ENCODE measurements at regions of chr6 and their contacts with region 1.

Region 1: GRCh38 chr6:7401075-7401474 is 11.5 kb downstream of the RIOK1 start:
- DNase-seq: peak; percentile 86
- ATAC-seq: peak; percentile 100
- H3K4me3 ChIP-seq: no peak overlapping the region; the same call in 1 of the 2 replicates
- H3K27ac ChIP-seq: peak overlapping the region; percentile 43
- H3K4me1 ChIP-seq: peaks cover 16% of the 10 kb centered on the region
- H3K27me3 ChIP-seq: no peaks in the 10 kb centered on the region
- CTCF ChIP-seq: no peak

Region 2: DNA sequence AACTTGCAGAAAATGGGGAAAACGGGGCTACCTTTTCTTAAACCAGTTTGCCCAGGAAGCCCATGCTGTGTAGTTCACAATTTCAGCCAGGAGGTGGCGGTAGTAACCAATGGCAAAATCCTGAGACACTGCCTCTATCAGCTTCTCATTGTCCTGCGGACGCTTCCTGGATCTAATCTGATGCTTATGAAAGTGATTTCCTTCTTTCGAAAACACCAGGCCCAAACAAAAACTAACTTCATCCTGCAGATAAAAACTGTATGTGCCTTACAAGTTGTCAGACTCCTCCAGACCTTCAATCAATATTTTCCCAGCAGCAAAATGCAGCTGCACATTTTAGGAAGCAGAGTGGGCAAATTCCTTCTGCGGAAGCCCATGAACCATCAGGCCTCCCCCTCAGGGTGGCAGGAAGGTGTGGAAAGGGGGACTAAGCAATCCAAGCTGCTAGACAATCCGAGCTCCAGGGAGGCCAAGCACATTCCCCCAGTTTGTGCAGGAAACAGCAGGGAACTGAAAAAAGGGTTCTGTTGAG is 724.1 kb before region 1 on chr6:
- CTCF ChIA-PET with region 1: no interaction called
- POLR2A ChIA-PET with region 1: no interaction called
- intact Hi-C with region 1: loop called (anchors 10 kb)
- DNase-seq: peak; percentile 93
- ATAC-seq: peak; percentile 74
- H3K4me3 ChIP-seq: no peak overlapping the region
- H3K27ac ChIP-seq: peak overlapping the region; percentile 36
- H3K4me1 ChIP-seq: peaks cover 17% of the 10 kb centered on the region
- H3K27me3 ChIP-seq: peaks cover 4% of the 10 kb centered on the region; the same call in 1 of the 2 replicates
- CTCF ChIP-seq: peak; percentile 96

Region 3: GRCh38 chr6:7324520-7324919 is 76.6 kb before region 1 on chr6:
- CTCF ChIA-PET with region 1: no interaction called
- POLR2A ChIA-PET with region 1: no interaction called
- intact Hi-C with region 1: no loop called
- DNase-seq: no peak
- ATAC-seq: no peak
- H3K4me3 ChIP-seq: no peak overlapping the region
- H3K27ac ChIP-seq: no peak overlapping the region
- H3K4me1 ChIP-seq: no peaks in the 10 kb centered on the region
- H3K27me3 ChIP-seq: no peaks in the 10 kb centered on the region
- CTCF ChIP-seq: no peak

Region 4: GRCh38 chr6:7489376-7489775 is 88.3 kb after region 1 on chr6:
- CTCF ChIA-PET with region 1: no interaction called
- POLR2A ChIA-PET with region 1: no interaction called
- intact Hi-C with region 1: no loop called
- DNase-seq: no peak
- ATAC-seq: no peak
- H3K4me3 ChIP-seq: no peak overlapping the region
- H3K27ac ChIP-seq: no peak overlapping the region
- H3K4me1 ChIP-seq: no peaks in the 10 kb centered on the region
- H3K27me3 ChIP-seq: no peaks in the 10 kb centered on the region
- CTCF ChIP-seq: no peak